ENCODE measurements at regions of chr17 and their contacts with region 1.

Region 1: GRCh38 chr17:47872021-47872650 is 21.2 kb upstream of the SP6 start:
- DNase-seq: no peak
- ATAC-seq: no peak
- H3K4me3 ChIP-seq: no peak overlapping the region
- H3K27ac ChIP-seq: no peak overlapping the region
- H3K4me1 ChIP-seq: peaks cover 6% of the 10 kb centered on the region
- H3K27me3 ChIP-seq: peaks cover 5 to 44% of the 10 kb centered on the region in 2 experiments
- CTCF ChIP-seq: no peak
- EP300 ChIP-seq: no peak
- POLR2A ChIP-seq: no peak
- RAD21 ChIP-seq: no peak

Region 2: DNA sequence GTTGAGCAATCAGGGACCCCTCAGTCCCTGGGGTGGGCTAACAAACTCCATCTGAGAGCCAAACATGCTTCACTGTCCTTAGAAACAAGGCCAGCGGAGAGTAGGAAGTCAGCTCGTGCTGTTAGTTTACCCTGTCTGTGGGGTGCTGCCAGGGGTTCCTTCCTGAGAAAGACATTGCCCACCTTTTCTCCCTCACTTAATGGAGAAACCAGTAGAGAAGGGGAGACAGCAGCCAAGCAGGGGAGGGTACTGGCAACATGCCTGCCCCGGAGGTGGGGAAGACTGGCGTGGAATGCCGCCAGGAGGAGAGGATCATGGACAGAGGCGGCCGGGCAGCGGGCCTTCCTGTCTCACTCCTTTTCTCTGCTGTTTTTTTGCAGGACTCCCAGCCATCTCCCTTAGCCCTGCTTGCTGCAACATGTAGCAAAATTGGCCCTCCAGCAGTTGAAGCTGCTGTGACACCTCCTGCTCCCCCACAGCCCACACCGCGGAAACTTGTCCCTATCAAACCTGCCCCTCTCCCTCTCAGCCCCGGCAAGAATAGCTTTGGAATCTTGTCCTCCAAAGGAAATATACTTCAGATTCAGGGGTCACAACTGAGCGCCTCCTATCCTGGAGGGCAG is 43.8 kb after region 1 on chr17:
- CTCF ChIA-PET with region 1: no interaction called
- POLR2A ChIA-PET with region 1: no interaction called
- in situ Hi-C with region 1: no loop called
- intact Hi-C with region 1: no loop called
- DNase-seq: no peak
- ATAC-seq: no peak
- H3K4me3 ChIP-seq: no peak overlapping the region
- H3K27ac ChIP-seq: no peak overlapping the region
- H3K4me1 ChIP-seq: peaks cover 7% of the 10 kb centered on the region
- H3K27me3 ChIP-seq: no peaks in the 10 kb centered on the region
- CTCF ChIP-seq: no peak
- EP300 ChIP-seq: no peak
- POLR2A ChIP-seq: no peak
- RAD21 ChIP-seq: no peak

Region 3: DNA sequence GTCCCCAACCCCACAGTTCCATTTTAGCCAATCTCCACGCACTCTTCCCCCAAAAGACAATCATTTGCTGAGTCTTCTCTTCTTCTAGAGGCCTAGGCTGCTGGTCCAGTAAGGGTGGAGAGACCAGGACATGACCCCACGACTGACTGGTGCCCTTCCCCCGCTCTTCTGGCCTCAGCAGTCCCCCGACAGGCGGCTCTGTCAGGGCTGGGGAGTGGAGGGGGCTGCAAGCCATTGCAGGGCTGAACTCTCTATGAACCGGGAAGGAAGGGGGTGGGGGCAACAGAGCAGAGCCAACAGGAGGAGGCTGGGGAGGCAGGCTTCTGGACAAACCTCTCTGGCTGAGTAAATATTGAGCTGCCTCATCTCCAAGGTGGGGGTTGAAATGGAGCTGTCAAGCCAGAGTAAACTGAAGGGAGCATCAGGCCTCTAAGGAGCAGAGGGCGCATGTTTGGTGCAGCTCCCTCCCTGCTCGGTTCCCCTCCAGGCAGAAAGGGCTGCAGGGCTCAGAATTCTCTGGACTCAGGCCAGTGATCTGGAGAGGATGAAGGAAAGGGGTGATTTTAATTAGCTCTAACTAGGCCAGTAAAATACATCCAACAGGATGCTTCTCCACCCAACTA is 650.0 kb after region 1 on chr17:
- CTCF ChIA-PET with region 1: no interaction called
- POLR2A ChIA-PET with region 1: no interaction called
- in situ Hi-C with region 1: no loop called
- intact Hi-C with region 1: loop called (anchors 5 kb)
- DNase-seq: no peak
- ATAC-seq: no peak; the same call in 2 of the 3 replicates
- H3K4me3 ChIP-seq: no peak overlapping the region
- H3K27ac ChIP-seq: no peak overlapping the region
- H3K4me1 ChIP-seq: no peaks in the 10 kb centered on the region
- H3K27me3 ChIP-seq: peaks cover 3 to 35% of the 10 kb centered on the region in 2 experiments; a peak in 4 of 5 replicates
- CTCF ChIP-seq: no peak
- EP300 ChIP-seq: no peak
- POLR2A ChIP-seq: no peak
- RAD21 ChIP-seq: no peak

Measured in HepG2 (cell line).